MCF 10A (cell line): ENCODE measurements at regions of chr15 and their contacts with region 1.

Region 1: DNA sequence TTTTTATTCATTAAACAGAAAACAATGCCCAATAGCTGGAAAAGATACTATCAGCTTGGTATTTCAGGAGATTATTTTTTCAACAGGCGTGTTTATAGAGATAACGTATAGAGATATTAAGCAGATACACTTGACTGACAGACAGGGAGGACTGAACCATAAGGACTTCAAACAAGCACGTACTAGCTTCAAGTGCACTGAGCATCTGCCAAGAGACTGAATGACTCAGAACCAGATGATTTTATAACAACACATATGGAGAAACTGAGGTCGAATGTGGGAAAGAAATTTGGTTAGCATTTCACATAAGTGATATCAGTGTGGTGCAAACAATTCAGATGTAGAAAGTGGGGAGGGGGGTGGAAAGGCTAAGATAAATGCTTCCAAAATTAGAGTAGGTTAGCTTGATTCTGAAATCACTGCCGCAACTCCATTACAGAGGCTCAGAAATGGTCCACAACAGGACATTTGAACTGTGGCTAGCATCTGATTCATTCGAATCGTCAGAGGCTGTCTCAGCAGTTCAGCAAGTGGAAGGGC is 103.5 kb downstream of the SEMA6D start:
- DNase-seq: peak; percentile 87
- H3K4me3 Mint-ChIP-seq: peak overlapping the region; percentile 57
- H3K27ac Mint-ChIP-seq: peak overlapping the region; percentile 53
- H3K4me1 Mint-ChIP-seq: peaks cover 27% of the 10 kb centered on the region
- H3K27me3 Mint-ChIP-seq: no peaks in the 10 kb centered on the region
- CTCF ChIP-seq: no peak

Region 2: GRCh38 chr15:47756872-47757271 is 64.0 kb before region 1 on chr15:
- CTCF ChIA-PET with region 1: no interaction called
- POLR2A ChIA-PET with region 1: interaction called, 6 read pairs
- intact Hi-C with region 1: loop called (anchors 10 kb)
- DNase-seq: peak; percentile 57
- H3K4me3 Mint-ChIP-seq: no peak overlapping the region
- H3K27ac Mint-ChIP-seq: no peak overlapping the region
- H3K4me1 Mint-ChIP-seq: peaks cover 5% of the 10 kb centered on the region
- H3K27me3 Mint-ChIP-seq: no peaks in the 10 kb centered on the region
- CTCF ChIP-seq: no peak

Region 3: DNA sequence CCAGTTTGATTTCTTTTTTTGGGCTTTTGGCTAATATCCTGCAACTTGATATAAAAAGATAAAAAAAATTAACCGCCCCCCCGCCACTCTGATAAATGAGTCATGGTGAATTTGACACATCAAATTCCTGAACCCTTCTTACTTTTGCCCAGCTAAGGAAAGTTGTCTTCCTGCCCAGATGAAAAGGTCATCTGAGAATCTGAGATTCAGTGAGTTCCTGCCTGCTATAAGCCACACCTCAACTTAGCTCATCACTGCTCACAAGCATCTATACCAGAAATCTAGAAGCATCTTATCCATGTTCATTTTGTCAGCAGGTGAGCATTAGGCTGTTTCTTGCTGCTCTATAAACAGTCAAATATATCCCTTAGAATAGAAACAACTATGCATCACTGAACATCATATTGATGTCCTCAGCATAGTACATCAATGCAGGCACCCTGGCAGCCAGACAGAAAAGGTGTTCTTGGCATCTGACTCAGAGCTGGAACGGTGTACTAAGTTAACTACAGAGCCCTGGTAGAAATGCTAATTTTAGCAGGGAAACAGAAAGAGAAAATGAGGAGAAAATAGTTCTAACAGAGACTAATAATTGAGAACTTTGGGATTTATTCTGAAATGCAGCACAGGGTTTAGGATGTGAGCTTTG is 26.5 kb before region 1 on chr15:
- CTCF ChIA-PET with region 1: interaction called, 4 read pairs
- POLR2A ChIA-PET with region 1: interaction called, 112 read pairs
- intact Hi-C with region 1: no loop called
- DNase-seq: peak; percentile 22
- H3K4me3 Mint-ChIP-seq: no peak overlapping the region
- H3K27ac Mint-ChIP-seq: peak overlapping the region; percentile 16
- H3K4me1 Mint-ChIP-seq: peaks cover 13% of the 10 kb centered on the region
- H3K27me3 Mint-ChIP-seq: no peaks in the 10 kb centered on the region
- CTCF ChIP-seq: no peak

Region 4: GRCh38 chr15:47900751-47901150 is 79.9 kb after region 1 on chr15:
- CTCF ChIA-PET with region 1: interaction called, 4 read pairs
- POLR2A ChIA-PET with region 1: interaction called, 31 read pairs
- intact Hi-C with region 1: no loop called
- DNase-seq: no peak
- H3K4me3 Mint-ChIP-seq: no peak overlapping the region
- H3K27ac Mint-ChIP-seq: peak overlapping the region; percentile 66
- H3K4me1 Mint-ChIP-seq: peaks cover 10% of the 10 kb centered on the region
- H3K27me3 Mint-ChIP-seq: no peaks in the 10 kb centered on the region
- CTCF ChIP-seq: no peak

Region 5: GRCh38 chr15:48062148-48062861 is 241.5 kb after region 1 on chr15:
- CTCF ChIA-PET with region 1: no interaction called
- POLR2A ChIA-PET with region 1: no interaction called
- intact Hi-C with region 1: no loop called
- DNase-seq: peak; percentile 44
- H3K4me3 Mint-ChIP-seq: no peak overlapping the region
- H3K27ac Mint-ChIP-seq: no peak overlapping the region
- H3K4me1 Mint-ChIP-seq: no peaks in the 10 kb centered on the region
- H3K27me3 Mint-ChIP-seq: no peaks in the 10 kb centered on the region
- CTCF ChIP-seq: no peak

Region 6: DNA sequence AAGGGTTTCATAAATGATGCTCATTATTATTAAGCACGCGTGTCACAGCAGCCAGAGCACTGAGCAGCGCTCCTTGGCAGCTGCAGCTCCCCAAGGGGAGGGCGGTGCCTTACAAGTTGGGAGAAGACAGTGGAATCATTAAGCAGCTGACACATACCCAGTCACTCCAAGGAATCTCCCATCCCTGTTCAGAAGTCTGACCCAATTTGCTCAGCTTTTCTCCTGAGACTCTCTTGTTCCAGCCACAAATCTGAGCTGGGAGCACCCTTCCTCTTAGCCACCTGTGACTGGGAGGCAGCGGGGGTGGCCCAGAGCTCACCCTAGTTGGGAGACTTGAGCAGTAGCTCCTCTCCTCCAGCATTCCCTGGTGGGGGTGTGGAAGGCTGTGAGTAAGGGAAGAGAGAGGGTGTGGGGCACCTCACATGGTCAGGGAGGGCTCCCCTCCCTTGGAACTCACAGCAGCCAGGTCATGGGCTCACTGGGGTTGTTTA is 574.7 kb after region 1 on chr15:
- CTCF ChIA-PET with region 1: no interaction called
- POLR2A ChIA-PET with region 1: no interaction called
- intact Hi-C with region 1: no loop called
- DNase-seq: no peak
- H3K4me3 Mint-ChIP-seq: no peak overlapping the region
- H3K27ac Mint-ChIP-seq: no peak overlapping the region
- H3K4me1 Mint-ChIP-seq: peaks cover 41% of the 10 kb centered on the region
- H3K27me3 Mint-ChIP-seq: no peaks in the 10 kb centered on the region
- CTCF ChIP-seq: no peak